HepG2 (cell line): ENCODE measurements at regions of chr4 and their contacts with region 1.

Region 1: GRCh38 chr4:147866532-147867271 is 134.8 kb downstream of the ARHGAP10 start:
- DNase-seq: peak; percentile 78
- ATAC-seq: peak; percentile 99
- H3K4me3 ChIP-seq: no peak overlapping the region
- H3K27ac ChIP-seq: no peak overlapping the region
- H3K4me1 ChIP-seq: no peaks in the 10 kb centered on the region
- H3K27me3 ChIP-seq: no peaks in the 10 kb centered on the region
- CTCF ChIP-seq: peak; percentile 95
- EP300 ChIP-seq: no peak
- POLR2A ChIP-seq: no peak
- RAD21 ChIP-seq: peak; percentile 88

Region 2: GRCh38 chr4:147160908-147161513 is 705.7 kb before region 1 on chr4:
- CTCF ChIA-PET with region 1: interaction called, 5 read pairs
- POLR2A ChIA-PET with region 1: no interaction called
- in situ Hi-C with region 1: loop called (anchors 25 kb)
- intact Hi-C with region 1: no loop called
- DNase-seq: peak; percentile 24
- ATAC-seq: peak; percentile 79
- H3K4me3 ChIP-seq: no peak overlapping the region
- H3K27ac ChIP-seq: no peak overlapping the region
- H3K4me1 ChIP-seq: peaks cover 7% of the 10 kb centered on the region
- H3K27me3 ChIP-seq: peaks cover 0 to 3% of the 10 kb centered on the region in 2 experiments; a peak in 2 of 5 replicates
- CTCF ChIP-seq: peak; percentile 69
- EP300 ChIP-seq: no peak
- POLR2A ChIP-seq: no peak
- RAD21 ChIP-seq: peak; percentile 29; the same call in 1 of the 2 replicates

Region 3: DNA sequence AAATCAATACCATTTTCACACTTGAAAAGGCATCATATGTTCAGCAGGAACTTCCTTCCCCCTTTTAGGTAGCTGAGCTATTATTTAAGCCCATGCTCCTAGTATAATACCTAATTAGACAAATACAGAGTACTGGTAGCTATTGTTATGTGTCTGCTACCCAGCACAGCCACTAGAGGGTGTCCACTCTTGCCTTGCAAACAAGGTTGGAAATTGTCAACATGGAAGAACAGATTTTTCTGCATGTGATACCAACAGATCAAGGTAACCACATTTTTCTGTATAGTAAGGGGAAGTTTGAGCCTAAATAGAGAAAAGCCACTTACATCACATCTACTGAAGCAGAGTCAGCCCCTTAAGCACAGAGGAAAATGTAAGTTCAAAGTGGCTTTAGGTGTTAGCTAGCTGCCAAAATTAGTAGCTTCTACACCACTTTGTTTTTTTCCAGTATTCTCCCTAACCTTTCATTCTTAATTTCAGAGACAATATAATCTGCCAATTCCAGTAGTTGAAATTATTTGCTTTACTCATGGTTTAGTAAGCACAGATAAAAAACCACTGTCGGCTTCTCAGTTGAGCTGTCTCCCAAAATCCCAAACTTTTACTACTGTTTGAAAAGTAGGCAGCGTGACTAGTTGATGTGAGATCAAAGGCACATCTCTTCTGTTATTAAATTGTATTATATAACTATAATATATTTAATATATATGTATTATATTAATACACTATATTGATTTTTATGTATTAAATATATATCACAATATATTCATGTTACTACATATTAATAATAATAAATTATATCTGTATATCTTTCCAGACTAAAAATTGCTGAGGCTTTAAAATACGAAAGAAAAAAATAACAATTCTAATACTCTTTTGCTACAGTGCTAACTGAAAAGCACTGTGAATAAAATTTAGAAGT is 347.6 kb before region 1 on chr4:
- CTCF ChIA-PET with region 1: interaction called, 16 read pairs
- POLR2A ChIA-PET with region 1: no interaction called
- in situ Hi-C with region 1: no loop called
- intact Hi-C with region 1: no loop called
- DNase-seq: peak; percentile 39
- ATAC-seq: peak; percentile 94
- H3K4me3 ChIP-seq: no peak overlapping the region
- H3K27ac ChIP-seq: no peak overlapping the region
- H3K4me1 ChIP-seq: no peaks in the 10 kb centered on the region
- H3K27me3 ChIP-seq: no peaks in the 10 kb centered on the region
- CTCF ChIP-seq: peak; percentile 78
- EP300 ChIP-seq: no peak
- POLR2A ChIP-seq: no peak
- RAD21 ChIP-seq: peak; percentile 39; the same call in 1 of the 2 replicates

Region 4: DNA sequence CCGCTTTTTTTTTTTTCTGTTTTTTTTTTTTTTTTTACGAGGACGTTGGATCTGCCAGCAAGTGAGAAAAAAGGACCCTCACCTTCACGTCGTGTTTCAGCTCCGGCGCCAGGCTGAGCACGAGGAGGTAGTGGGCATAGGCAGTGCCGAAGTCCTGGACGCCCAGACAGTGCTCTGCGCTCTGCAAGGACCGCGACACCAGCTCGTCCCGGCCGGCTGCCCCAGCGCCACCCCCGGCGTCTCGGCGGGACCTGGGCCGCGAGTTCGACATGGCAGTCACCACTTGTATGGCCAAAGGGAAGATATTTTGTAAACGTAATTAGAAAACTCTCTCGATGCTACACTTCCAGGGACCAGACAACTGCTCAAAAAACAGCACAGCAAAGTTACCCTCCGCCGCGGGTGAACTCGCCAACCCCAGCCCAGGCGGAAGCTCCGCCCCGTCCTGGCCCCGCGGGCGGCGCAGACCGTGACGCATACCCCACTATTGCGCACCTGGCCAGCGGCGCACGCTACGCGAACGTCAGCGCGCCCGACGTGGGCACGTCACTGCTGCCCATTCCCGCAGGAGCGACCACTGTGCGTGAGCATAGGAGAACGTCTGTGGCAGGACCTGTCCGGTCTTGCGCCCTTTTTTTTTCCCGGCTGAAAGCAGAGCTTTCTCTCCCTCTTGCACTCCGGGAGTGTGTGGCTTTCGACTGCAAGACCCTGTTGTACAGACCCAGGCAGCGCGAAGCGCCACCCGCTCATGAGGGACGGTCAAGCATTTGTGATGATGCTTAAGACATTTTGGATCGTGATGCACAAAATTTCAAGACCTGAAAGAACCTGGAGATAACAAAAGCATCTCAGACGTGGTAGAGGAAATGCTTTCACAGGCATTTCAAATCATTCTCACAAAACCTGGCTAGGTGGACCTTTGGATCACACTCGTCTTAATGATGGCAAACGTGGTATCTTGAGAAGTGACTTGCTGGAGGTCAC is 182.7 kb before region 1 on chr4 and contains the start of gene PRMT9:
- CTCF ChIA-PET with region 1: interaction called, 7 read pairs
- POLR2A ChIA-PET with region 1: no interaction called
- in situ Hi-C with region 1: no loop called
- intact Hi-C with region 1: loop called (anchors 2 kb)
- DNase-seq: peak; percentile 81
- ATAC-seq: peak; percentile 99
- H3K4me3 ChIP-seq: peak within 1 kb of the TSS; percentile 63 to 91 (median 66)
- H3K27ac ChIP-seq: peak within 1 kb of the TSS; percentile 79
- H3K4me1 ChIP-seq: peaks cover 11% of the 10 kb centered on the region
- H3K27me3 ChIP-seq: no peaks in the 10 kb centered on the region; a peak in 1 of 5 replicates
- CTCF ChIP-seq: no peak
- EP300 ChIP-seq: no peak
- POLR2A ChIP-seq: peak; percentile 84 to 95
- RAD21 ChIP-seq: peak; percentile 14; the same call in 1 of the 2 replicates
- total RNA-seq, gene PRMT9: 9.7 and 10.4 TPM in 2 replicates

Region 5: GRCh38 chr4:147707865-147708672 is 158.6 kb before region 1 on chr4:
- CTCF ChIA-PET with region 1: interaction called, 51 read pairs
- POLR2A ChIA-PET with region 1: no interaction called
- in situ Hi-C with region 1: loop called (anchors 10 kb)
- intact Hi-C with region 1: loop called (anchors 1 kb)
- DNase-seq: peak; percentile 19
- ATAC-seq: peak; percentile 80
- H3K4me3 ChIP-seq: no peak overlapping the region
- H3K27ac ChIP-seq: no peak overlapping the region
- H3K4me1 ChIP-seq: no peaks in the 10 kb centered on the region
- H3K27me3 ChIP-seq: no peaks in the 10 kb centered on the region
- CTCF ChIP-seq: peak; percentile 70
- EP300 ChIP-seq: no peak
- POLR2A ChIP-seq: no peak
- RAD21 ChIP-seq: no peak

Region 6: GRCh38 chr4:147924604-147925412 is 58.1 kb after region 1 on chr4:
- CTCF ChIA-PET with region 1: no interaction called
- POLR2A ChIA-PET with region 1: no interaction called
- in situ Hi-C with region 1: no loop called
- intact Hi-C with region 1: no loop called
- DNase-seq: peak; percentile 5
- ATAC-seq: peak; percentile 69
- H3K4me3 ChIP-seq: no peak overlapping the region
- H3K27ac ChIP-seq: no peak overlapping the region
- H3K4me1 ChIP-seq: no peaks in the 10 kb centered on the region
- H3K27me3 ChIP-seq: no peaks in the 10 kb centered on the region
- CTCF ChIP-seq: peak; percentile 45
- EP300 ChIP-seq: no peak
- POLR2A ChIP-seq: no peak
- RAD21 ChIP-seq: no peak

Region 7: DNA sequence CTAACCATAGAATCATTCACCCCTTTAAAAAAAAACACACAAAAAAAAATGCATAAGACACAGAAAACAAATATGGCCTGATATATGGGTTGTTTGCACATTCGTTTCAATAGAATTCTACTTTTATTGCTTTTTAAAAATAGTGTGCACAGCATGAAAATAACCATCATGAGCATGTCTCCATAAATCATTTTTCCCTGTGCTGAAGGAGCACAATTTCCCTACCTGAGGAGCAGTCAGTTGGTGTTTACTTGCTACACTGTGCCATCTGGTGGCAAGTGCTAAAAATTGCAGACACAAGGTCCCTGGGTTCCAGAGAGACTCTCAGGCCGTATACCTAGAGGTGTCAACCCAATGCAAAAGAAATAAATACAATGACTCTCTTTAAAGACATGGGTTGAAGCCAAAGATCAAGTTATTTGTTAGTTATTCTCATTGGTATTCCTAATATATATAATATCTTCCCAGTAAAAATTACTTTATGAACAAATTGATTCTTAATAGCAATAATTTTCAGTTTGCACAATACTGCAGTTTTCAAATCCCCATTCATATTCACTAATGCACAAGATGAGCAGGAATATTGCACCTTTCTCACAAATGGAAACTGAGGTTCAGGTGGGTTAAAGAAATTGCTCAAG is 1397.5 kb after region 1 on chr4:
- CTCF ChIA-PET with region 1: no interaction called
- POLR2A ChIA-PET with region 1: no interaction called
- in situ Hi-C with region 1: no loop called
- intact Hi-C with region 1: loop called (anchors 5 kb)
- DNase-seq: peak; percentile 50
- ATAC-seq: peak; percentile 88
- H3K4me3 ChIP-seq: no peak overlapping the region
- H3K27ac ChIP-seq: no peak overlapping the region
- H3K4me1 ChIP-seq: no peaks in the 10 kb centered on the region
- H3K27me3 ChIP-seq: no peaks in the 10 kb centered on the region
- CTCF ChIP-seq: peak; percentile 75
- EP300 ChIP-seq: no peak
- POLR2A ChIP-seq: no peak
- RAD21 ChIP-seq: 0 out of 2 replicates have a peak, but pooled peaks have one; percentile 29